ENCODE measurements at regions of chr2 and their contacts with region 1.

Region 1: GRCh38 chr2:172465417-172466334 is 38.3 kb downstream of the ITGA6 start:
- DNase-seq: peak; percentile 83
- H3K4me3 ChIP-seq: peak overlapping the region in 1 of 4 donors; percentile 31
- H3K27ac ChIP-seq: peak overlapping the region; percentile 81 to 90 (median 85)
- H3K4me1 ChIP-seq: peaks cover 33 to 53% (median 47%) of the 10 kb centered on the region in 4 donors
- H3K27me3 ChIP-seq: no peaks in the 10 kb centered on the region
- CTCF ChIP-seq: peak; percentile 79 to 95 (median 84)
- EP300 ChIP-seq: no peak
- POLR2A ChIP-seq: no peak

Region 2: DNA sequence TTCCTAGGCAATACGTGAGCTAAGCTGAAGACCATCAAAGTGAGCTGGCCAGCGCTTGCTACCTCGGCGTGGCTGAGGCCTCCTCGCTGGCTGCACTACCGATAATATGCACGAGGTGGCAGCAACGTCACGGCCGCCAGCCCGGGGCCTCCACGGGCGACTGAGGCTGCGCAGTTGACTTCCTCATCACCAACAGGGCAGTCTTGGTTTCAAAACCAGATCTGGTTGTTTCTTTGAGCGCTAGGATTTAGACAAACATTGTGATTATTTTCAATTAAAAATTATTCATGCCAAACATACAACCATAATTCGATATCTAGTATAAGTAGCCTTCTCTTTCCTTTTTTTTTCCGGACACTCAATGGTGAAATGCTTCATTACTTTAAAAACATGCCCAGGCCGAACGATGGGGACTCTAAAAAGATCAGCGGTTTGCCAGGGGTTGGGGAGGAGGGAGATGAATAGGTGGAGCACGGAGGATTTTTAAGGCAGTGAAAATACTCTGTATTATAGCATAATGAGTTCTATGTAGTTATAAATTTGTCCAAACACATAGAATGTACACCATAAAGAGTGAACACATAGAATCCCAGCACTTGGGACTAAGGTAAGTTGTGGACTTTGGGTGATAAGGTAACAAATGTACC is 891.4 kb before region 1 on chr2:
- in situ Hi-C with region 1: no loop called
- intact Hi-C with region 1: loop called (anchors 10 kb)
- DNase-seq: peak; percentile 83
- H3K4me3 ChIP-seq: no peak overlapping the region
- H3K27ac ChIP-seq: no peak overlapping the region
- H3K4me1 ChIP-seq: no peaks in the 10 kb centered on the region
- H3K27me3 ChIP-seq: peaks cover 7% of the 10 kb centered on the region
- CTCF ChIP-seq: peak; percentile 88 to 98 (median 97)
- EP300 ChIP-seq: no peak
- POLR2A ChIP-seq: no peak

Region 3: DNA sequence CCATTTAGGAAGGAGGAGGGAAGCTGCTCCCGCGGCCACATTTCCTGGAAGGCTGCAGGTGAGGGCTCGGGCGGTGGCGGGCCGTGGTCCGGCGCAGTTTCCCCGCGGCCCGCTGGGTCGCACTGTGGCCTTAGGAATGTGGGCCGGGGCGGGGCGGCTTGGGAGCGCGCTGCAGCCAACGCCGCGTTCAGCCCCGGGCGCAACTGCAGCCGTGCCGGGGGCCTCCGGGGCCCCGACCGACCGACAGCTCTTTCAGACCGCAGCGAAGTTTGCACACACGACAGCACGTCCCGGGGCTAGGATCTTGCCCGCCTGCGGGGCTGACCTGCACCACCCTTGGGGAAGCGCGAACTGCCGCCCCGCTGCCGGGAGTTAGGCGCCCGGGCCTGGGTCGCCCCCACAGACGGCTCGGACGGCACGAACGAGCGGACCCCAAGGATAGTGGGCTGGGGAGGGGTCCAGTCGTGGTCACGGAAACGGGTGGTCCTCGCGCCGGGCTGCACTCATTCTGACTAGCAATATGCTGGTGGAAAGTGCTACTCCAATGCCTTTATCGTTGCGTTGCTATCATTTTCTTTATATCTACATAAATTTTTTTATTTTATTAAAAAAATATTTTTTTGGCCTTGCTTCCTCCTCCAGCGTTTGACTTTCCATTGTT is 293.0 kb before region 1 on chr2:
- in situ Hi-C with region 1: loop called (anchors 5 to 10 kb)
- intact Hi-C with region 1: loop called (anchors 1 kb)
- DNase-seq: peak; percentile 86
- H3K4me3 ChIP-seq: peak overlapping the region; percentile 41 to 61 (median 50)
- H3K27ac ChIP-seq: peak overlapping the region; percentile 64 to 83 (median 76)
- H3K4me1 ChIP-seq: peaks cover 0 to 46% (median 27%) of the 10 kb centered on the region in 4 donors
- H3K27me3 ChIP-seq: peaks cover 13% of the 10 kb centered on the region
- CTCF ChIP-seq: peak; percentile 66 to 92 (median 80)
- EP300 ChIP-seq: no peak
- POLR2A ChIP-seq: peak; percentile 46

Region 4: GRCh38 chr2:172704072-172704936 is 238.6 kb after region 1 on chr2:
- in situ Hi-C with region 1: no loop called
- intact Hi-C with region 1: loop called (anchors 10 kb)
- DNase-seq: no peak
- H3K4me3 ChIP-seq: no peak overlapping the region
- H3K27ac ChIP-seq: no peak overlapping the region
- H3K4me1 ChIP-seq: no peaks in the 10 kb centered on the region
- H3K27me3 ChIP-seq: no peaks in the 10 kb centered on the region
- CTCF ChIP-seq: peak; percentile 30 to 56 (median 43)
- EP300 ChIP-seq: no peak
- POLR2A ChIP-seq: no peak

Region 5: DNA sequence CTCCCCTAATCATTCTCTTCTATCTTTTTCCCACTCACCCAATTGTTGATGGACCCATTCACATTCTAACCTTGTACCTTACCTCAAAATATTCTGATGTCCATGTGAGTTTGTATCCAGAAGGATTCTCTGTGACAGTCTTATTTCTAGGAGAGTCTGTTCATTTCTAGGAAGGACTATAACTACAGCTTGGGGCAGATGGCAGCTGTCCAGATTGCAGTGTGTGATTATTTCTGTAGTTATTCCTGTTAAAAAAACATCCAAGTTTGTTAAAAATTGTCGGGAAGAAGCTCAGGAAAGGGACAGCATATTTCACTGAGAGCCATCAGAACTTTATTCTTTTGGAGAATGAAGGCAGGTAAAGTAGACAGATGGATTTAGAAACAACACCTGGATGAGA is 412.6 kb after region 1 on chr2:
- in situ Hi-C with region 1: no loop called
- intact Hi-C with region 1: no loop called
- DNase-seq: no peak
- H3K4me3 ChIP-seq: no peak overlapping the region
- H3K27ac ChIP-seq: no peak overlapping the region
- H3K4me1 ChIP-seq: no peaks in the 10 kb centered on the region
- H3K27me3 ChIP-seq: peaks cover 6% of the 10 kb centered on the region
- CTCF ChIP-seq: no peak
- EP300 ChIP-seq: no peak
- POLR2A ChIP-seq: no peak